ENCODE measurements at regions of chr7 and their contacts with region 1.

Region 1: GRCh38 chr7:70647801-70648498 is 484.0 kb upstream of the GALNT17 start:
- DNase-seq: peak; percentile 76
- ATAC-seq: peak; percentile 98
- H3K4me3 Mint-ChIP-seq: peak overlapping the region; percentile 56
- H3K27ac Mint-ChIP-seq: peak overlapping the region; percentile 90
- H3K4me1 Mint-ChIP-seq: peaks cover 25% of the 10 kb centered on the region
- H3K27me3 Mint-ChIP-seq: peaks cover 11% of the 10 kb centered on the region

Region 2: GRCh38 chr7:70660154-70660818 is 12.3 kb after region 1 on chr7:
- POLR2A ChIA-PET with region 1: interaction called, 24 read pairs
- DNase-seq: peak; percentile 61
- ATAC-seq: peak; percentile 93
- H3K4me3 Mint-ChIP-seq: peak overlapping the region; percentile 58
- H3K27ac Mint-ChIP-seq: peak overlapping the region; percentile 91
- H3K4me1 Mint-ChIP-seq: peaks cover 22% of the 10 kb centered on the region
- H3K27me3 Mint-ChIP-seq: peaks cover 1% of the 10 kb centered on the region